ENCODE measurements at regions of chr2 and their contacts with region 1.

Region 1: DNA sequence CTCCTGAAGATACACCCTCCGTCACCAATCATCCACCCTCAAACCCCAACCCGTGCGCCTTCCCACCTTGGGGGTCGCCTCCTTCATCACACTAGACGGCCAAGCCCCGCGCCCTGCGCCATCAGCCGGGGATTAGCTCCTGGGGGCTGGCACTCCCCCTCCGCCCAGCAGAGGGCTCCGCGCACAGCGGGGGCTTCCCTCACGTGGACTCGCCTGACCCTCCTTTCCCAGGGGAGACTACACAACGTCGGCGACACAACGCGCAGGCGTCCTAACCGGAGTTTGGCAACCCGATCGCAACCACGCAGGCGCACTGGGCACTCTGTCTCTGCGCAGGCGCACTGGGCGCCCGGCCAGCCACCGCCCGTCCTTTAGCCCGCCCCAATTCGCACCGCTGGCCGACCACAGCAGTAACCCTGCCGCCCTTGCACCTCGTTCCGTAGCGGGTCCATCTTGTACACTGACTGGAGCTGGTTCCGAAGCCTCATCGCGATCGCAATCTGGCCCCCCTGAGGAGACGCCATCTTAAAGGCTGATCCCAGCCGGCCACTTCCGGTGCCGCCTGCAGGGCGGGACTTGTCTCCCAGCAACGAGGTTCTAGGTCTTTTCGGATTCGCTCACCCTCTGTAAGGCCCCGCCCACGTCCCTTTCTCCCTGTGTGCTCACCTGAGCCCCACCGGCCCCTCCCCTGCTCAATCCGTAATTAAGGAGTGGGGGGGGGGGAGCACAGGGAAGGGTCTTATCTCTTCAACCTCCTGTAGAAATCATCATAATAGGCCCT is at the start of gene PCGF1:
- DNase-seq: peak; percentile 91 to 99 (median 98)

Region 2: GRCh38 chr2:74414881-74415761 is 92.2 kb before region 1 on chr2:
- intact Hi-C with region 1: no loop called
- DNase-seq: peak in 8 of 10 donors; percentile 45 to 93 (median 68)

Region 3: DNA sequence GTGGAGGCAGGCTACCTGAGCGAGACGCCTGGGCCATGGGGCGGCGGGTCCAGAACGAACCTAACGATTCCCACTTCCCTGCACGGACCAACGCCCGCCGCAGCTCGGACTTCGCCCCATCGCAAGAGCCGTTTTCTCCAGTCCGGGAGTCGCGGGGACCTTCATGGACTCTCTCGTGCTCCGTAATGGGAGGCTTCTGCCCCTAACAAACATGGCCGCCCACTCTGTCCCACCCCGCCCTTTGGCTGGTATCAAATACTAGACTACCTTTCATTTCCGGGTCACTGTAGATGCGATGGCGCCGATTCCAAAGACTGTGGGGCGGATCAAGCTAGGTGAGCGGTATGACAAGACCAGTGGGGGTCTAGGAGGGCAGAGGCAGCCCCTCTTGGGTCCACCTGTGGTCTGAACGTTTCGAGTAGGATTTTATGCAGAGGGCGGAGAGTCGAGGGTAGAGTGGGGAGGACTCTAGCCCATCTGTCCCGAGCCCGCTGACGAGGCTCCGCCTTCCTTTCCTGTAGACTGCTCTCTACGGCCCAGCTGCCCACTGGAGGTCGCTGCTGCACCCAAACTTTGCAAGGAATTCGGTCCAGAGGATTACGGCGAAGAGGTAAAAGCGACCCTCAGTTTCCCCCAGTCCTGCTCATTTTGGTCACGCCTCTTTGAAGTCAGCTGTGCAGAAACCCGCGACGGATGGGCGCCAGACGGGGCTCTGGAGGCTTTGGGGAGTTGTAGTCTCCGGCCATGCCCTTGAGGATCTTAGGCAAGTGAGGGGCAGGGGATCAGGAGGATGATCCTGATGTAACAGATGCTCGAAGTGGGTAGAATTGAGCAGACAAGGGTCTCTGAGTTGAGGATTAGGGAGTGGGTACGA is 24.3 kb before region 1 on chr2 and contains the starts of genes CCDC142 and TTC31:
- intact Hi-C with region 1: loop called (anchors 1 kb)
- DNase-seq: peak; percentile 90 to 99 (median 94)

Region 4: GRCh38 chr2:74587664-74588277 is 80.4 kb after region 1 on chr2:
- intact Hi-C with region 1: loop called (anchors 5 kb)
- DNase-seq: peak in 6 of 10 donors; percentile 22 to 91 (median 52)

Measured in posterior cingulate gyrus (tissue), 11 donors.